ENCODE measurements at regions of chr20 and their contacts with region 1.

Region 1: GRCh38 chr20:37384683-37385174 is 38.8 kb downstream of the SRC start:
- DNase-seq: peak; percentile 84
- ATAC-seq: peak; percentile 94
- H3K4me3 Mint-ChIP-seq: peak overlapping the region; percentile 74
- H3K27ac Mint-ChIP-seq: peak overlapping the region; percentile 75
- H3K4me1 Mint-ChIP-seq: peaks cover 4% of the 10 kb centered on the region
- H3K27me3 Mint-ChIP-seq: peaks cover 5% of the 10 kb centered on the region

Region 2: DNA sequence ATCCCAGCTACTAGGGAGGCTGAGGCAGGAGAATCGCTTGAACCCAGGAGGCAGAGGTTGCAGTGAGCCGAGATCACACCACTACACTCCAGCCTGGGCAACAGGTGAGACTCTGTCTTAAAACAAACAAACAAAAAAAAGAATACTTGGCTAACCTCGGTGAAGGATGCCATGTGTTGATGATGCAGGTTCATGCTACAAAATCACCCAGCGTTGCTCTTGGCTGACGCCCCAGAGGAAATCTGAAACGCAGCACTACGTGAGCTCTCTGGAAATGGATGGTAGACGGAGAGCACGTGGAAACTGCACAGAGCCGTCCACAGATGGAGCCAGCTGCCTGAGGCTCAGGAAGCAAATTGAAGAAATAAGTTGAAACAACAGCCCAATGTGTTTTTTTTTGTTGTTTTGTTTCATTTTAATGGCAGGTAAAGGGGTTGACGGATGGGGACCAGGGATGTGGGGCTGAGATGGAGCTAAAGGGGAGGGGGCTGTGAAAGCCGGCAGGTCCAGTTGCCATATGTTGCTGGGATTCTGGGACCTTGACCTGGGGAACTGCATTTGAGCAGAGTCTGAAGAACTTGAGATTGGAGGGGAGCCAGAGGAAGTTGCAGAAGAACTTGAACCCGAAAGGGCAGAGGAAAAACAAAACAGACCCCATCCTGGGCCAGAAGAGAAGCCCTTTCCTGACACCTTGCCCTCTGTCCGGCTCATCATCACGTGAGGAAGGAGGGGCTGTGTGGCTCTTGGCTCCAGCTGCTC is 108.1 kb before region 1 on chr20:
- CTCF ChIA-PET with region 1: interaction called, 20 read pairs
- POLR2A ChIA-PET with region 1: no interaction called
- DNase-seq: peak; percentile 38
- ATAC-seq: peak; percentile 67
- H3K4me3 Mint-ChIP-seq: no peak overlapping the region
- H3K27ac Mint-ChIP-seq: no peak overlapping the region
- H3K4me1 Mint-ChIP-seq: peaks cover 9% of the 10 kb centered on the region
- H3K27me3 Mint-ChIP-seq: peaks cover 2% of the 10 kb centered on the region

Region 3: DNA sequence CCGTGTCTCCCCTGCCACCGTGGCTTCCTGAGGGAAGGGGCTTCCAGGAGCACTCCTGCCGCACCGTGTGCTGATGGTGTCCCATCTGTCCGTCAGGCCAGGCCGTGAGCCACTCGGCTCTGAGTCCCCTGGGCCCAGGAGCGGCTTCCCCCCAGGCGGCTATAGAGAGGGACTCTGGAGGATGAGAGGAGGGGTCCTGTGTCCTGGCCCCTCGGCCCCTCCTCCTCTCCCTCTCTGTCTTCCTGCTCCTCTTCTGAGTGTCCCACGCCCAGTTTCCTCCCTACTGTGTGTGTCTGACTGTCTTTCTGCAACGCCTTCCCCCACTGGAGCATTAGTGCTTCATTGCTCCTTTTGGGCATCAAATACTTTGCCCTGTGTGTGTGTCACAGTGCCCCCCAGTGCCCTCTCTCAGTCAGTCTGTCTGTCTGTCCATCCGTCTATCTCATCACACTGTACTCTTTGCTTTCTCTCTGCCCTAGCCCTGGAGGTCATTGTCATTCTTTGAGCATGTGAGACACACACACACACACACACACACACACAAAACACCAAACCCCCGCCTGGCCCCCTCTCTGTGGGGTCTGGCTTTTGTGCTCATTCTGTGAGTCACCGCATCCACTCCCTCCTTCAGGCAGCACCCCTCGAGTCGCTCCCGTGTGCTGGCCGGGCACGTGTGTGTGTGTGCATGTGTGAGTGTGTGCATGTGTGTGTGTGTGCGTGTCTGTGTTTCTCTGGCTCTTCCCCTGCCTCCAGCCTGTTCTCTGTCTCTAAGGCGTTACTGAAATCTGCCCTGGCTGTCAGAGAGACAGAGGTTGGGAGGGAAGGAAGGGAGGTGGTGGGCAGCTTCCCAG is 33.1 kb after region 1 on chr20:
- CTCF ChIA-PET with region 1: no interaction called
- POLR2A ChIA-PET with region 1: no interaction called
- DNase-seq: no peak
- ATAC-seq: no peak
- H3K4me3 Mint-ChIP-seq: no peak overlapping the region
- H3K27ac Mint-ChIP-seq: no peak overlapping the region
- H3K4me1 Mint-ChIP-seq: no peaks in the 10 kb centered on the region
- H3K27me3 Mint-ChIP-seq: peaks cover 21% of the 10 kb centered on the region

Measured in activated CD8-positive, alpha-beta T cell treated with anti-CD3 and anti-CD28 coated beads, Interleukin-2, amount 10 ng/mL, durations not matched to agents 7 days and 5 days (primary cell).